Activated naive CD4-positive, alpha-beta T cell treated with anti-CD3 and anti-CD28 coated beads for 36 hours (primary cell): ENCODE measurements at regions of chr7 and their contacts with region 1.

Region 1: GRCh38 chr7:42876182-42877068 is 35.4 kb downstream of the C7orf25 start:
- DNase-seq: peak; percentile 82
- H3K4me3 Mint-ChIP-seq: no peak overlapping the region
- H3K27ac Mint-ChIP-seq: no peak overlapping the region
- H3K4me1 Mint-ChIP-seq: no peaks in the 10 kb centered on the region
- H3K27me3 Mint-ChIP-seq: no peaks in the 10 kb centered on the region

Region 2: GRCh38 chr7:42014625-42015546 is 861.5 kb before region 1 on chr7:
- CTCF ChIA-PET with region 1: no interaction called
- intact Hi-C with region 1: loop called (anchors 1 kb)
- DNase-seq: peak; percentile 65
- H3K4me3 Mint-ChIP-seq: no peak overlapping the region
- H3K27ac Mint-ChIP-seq: no peak overlapping the region
- H3K4me1 Mint-ChIP-seq: no peaks in the 10 kb centered on the region
- H3K27me3 Mint-ChIP-seq: peaks cover 17% of the 10 kb centered on the region

Region 3: GRCh38 chr7:42843205-42843800 is 33.1 kb before region 1 on chr7:
- CTCF ChIA-PET with region 1: interaction called, 11 read pairs
- intact Hi-C with region 1: no loop called
- DNase-seq: peak; percentile 45
- H3K4me3 Mint-ChIP-seq: no peak overlapping the region
- H3K27ac Mint-ChIP-seq: no peak overlapping the region
- H3K4me1 Mint-ChIP-seq: no peaks in the 10 kb centered on the region
- H3K27me3 Mint-ChIP-seq: peaks cover 17% of the 10 kb centered on the region

Region 4: DNA sequence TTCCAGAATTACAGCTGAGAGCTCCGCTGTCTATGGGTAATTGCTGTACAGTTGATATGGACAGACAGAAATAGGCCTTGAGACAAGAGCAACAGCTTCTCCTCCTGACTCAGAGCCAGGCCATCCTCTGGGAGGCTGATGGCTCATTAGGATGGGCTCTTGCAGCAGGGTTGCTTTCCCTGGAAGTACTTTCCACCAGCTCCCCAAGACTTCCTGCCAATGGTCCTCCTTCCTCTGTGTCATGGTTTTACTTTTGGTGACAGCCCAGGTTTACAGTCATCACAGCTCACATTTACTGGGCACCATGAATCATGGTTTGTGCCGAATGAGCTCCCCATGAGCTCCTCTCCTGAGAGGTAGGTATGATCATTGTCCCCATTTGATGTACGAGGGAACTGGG is 367.8 kb after region 1 on chr7:
- CTCF ChIA-PET with region 1: no interaction called
- intact Hi-C with region 1: no loop called
- DNase-seq: peak; percentile 8
- H3K4me3 Mint-ChIP-seq: no peak overlapping the region
- H3K27ac Mint-ChIP-seq: no peak overlapping the region
- H3K4me1 Mint-ChIP-seq: no peaks in the 10 kb centered on the region
- H3K27me3 Mint-ChIP-seq: peaks cover 8% of the 10 kb centered on the region